ENCODE measurements at regions of chr2 and their contacts with region 1.

Region 1: DNA sequence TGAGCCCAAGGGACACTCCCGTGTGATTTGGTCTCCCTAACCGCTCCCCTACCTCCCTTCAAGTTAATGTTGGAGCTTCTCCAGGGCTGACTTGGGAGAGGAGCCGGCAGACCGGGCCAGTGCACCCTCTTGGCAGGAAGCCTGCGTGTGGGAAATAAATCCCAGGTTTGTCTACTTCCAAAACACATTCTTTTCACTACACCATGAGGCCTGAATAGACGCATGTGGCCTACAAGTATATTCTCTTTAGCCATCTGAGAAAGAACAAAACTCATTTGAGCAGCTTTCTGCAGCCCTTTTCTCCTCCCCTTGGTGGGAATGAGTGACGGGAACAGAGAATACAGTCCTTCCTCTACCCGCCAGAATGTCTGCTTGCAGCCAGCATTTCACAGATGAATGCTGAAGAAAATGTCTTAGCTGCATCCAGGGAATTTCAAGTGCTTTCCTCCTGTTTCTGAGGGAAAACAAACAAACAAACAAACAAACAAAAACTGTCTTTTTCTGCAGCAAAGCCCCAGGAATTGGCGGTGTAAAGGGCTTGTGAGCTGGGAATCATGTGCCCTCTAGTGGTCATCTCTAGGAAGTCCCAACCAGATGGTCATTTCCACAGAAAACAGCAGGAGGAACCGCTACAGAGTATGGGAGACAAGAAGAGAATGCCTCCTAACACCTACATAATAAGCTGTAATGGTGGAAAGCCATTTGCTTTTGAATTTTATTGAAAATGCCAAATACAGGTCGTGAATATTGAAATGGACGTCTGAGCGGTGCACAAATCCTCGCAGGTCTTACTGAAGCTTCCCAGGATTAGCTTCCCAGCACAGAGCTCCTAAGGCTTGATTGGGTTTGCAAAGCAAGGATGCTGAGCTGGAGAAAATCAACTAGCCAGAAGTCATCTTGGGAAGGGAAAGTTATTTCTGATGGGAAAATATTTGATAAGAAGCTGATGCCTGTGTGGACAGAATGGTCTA is 41.2 kb upstream of the DAPL1 start:
- DNase-seq: peak; percentile 71
- H3K4me3 ChIP-seq: peak overlapping the region in 1 of 2 experiments; percentile 27; a peak in 1 of 4 replicates
- H3K27ac ChIP-seq: no peak overlapping the region
- H3K4me1 ChIP-seq: 0 out of 4 replicates have a peak, but pooled peaks cover 0 to 2% of the 10 kb centered on the region in 2 experiments
- H3K27me3 ChIP-seq: peaks cover 5% of the 10 kb centered on the region; the same call in 1 of the 2 replicates
- CTCF ChIP-seq: peak; percentile 91
- EP300 ChIP-seq: no peak
- RAD21 ChIP-seq: peak; percentile 92

Region 2: GRCh38 chr2:157492189-157492773 is 1261.6 kb before region 1 on chr2:
- CTCF ChIA-PET with region 1: interaction called, 15 read pairs
- POLR2A ChIA-PET with region 1: no interaction called
- DNase-seq: peak; percentile 54
- H3K4me3 ChIP-seq: peak overlapping the region in 1 of 2 experiments; percentile 41; a peak in 1 of 4 replicates
- H3K27ac ChIP-seq: no peak overlapping the region
- H3K4me1 ChIP-seq: no peaks in the 10 kb centered on the region
- H3K27me3 ChIP-seq: peaks cover 23% of the 10 kb centered on the region
- CTCF ChIP-seq: peak; percentile 71
- EP300 ChIP-seq: no peak
- RAD21 ChIP-seq: peak; percentile 83

Region 3: DNA sequence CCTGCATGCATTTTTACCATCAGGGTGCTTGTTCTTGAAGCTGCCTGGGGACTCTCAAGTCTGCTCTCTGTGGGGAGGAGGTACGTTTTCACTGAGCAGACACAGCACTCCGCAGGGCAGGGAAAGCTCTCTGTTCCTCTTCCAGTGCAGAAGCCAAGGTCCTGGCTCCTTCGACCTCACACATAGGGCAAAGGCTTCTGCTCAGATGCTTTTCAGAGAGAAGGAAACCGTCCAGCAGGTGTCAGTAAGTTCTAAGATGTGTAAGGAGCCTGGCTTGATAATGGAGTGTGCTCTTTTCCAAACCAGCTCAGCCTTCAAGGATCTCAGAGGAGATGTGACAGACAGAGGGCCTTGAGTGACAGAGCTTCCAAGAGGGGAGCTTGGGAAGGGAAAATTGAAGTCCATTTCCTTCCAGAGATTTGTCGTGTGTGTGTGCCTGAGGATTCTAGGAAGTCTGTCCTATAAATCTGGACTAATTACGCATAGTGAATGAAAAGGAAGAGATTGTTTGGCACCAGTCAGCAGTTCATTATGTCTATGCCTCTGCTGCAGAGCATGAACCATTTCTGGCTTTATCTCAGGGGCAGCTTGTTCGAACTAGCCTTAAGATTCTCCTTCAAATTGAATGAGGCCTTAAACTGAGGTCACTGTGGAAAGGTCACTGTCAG is 719.6 kb before region 1 on chr2:
- CTCF ChIA-PET with region 1: interaction called, 105 read pairs
- POLR2A ChIA-PET with region 1: no interaction called
- DNase-seq: peak; percentile 39
- H3K4me3 ChIP-seq: no peak overlapping the region
- H3K27ac ChIP-seq: no peak overlapping the region
- H3K4me1 ChIP-seq: peaks cover 0 to 5% of the 10 kb centered on the region in 2 experiments; a peak in 1 of 4 replicates
- H3K27me3 ChIP-seq: no peaks in the 10 kb centered on the region
- CTCF ChIP-seq: peak; percentile 53
- EP300 ChIP-seq: no peak
- RAD21 ChIP-seq: peak; percentile 80

Region 4: GRCh38 chr2:158456309-158457066 is 297.4 kb before region 1 on chr2 and contains the starts of genes CCDC148 and PKP4:
- CTCF ChIA-PET with region 1: interaction called, 18 read pairs
- POLR2A ChIA-PET with region 1: interaction called, 4 read pairs
- DNase-seq: peak; percentile 95
- H3K4me3 ChIP-seq: peak within 1 kb of the TSS; percentile 76 to 77
- H3K27ac ChIP-seq: peak within 1 kb of the TSS; percentile 72 to 87
- H3K4me1 ChIP-seq: peaks cover 15 to 23% of the 10 kb centered on the region in 2 experiments; a peak in 3 of 4 replicates
- H3K27me3 ChIP-seq: no peaks in the 10 kb centered on the region
- CTCF ChIP-seq: 0 out of 2 replicates have a peak, but pooled peaks have one; percentile 7
- EP300 ChIP-seq: no peak
- RAD21 ChIP-seq: no peak
- polyA plus RNA-seq, gene CCDC148: 0.18 TPM in 1 of 2 replicates, not detected in the other
- polyA plus RNA-seq, gene PKP4: 10.9 and 13.8 TPM in 2 replicates

Region 5: GRCh38 chr2:158733430-158733755 is 20.5 kb before region 1 on chr2:
- CTCF ChIA-PET with region 1: interaction called, 13 read pairs
- POLR2A ChIA-PET with region 1: no interaction called
- DNase-seq: no peak
- H3K4me3 ChIP-seq: no peak overlapping the region
- H3K27ac ChIP-seq: no peak overlapping the region
- H3K4me1 ChIP-seq: no peaks in the 10 kb centered on the region
- H3K27me3 ChIP-seq: no peaks in the 10 kb centered on the region; the same call in 1 of the 2 replicates
- CTCF ChIP-seq: no peak
- EP300 ChIP-seq: no peak
- RAD21 ChIP-seq: no peak

Region 6: DNA sequence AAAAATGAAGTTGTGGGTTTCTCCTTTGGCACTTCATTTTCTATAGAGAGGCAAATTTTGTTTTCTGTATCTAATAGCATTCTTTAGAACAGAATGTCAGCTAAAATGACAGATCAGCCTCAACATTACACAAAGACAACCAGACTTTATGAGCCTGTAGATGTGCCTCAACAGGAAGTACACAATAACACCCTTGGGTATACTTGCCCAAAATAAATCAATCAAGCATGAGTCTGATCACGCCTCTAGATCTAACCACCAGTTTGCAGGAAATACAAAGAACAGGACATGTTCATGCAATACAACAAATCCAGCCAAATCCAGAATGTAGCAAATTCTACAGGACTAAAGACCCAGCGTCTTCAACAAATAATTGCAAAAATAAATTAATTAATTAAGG is 30.0 kb after region 1 on chr2:
- CTCF ChIA-PET with region 1: interaction called, 10 read pairs
- POLR2A ChIA-PET with region 1: no interaction called
- DNase-seq: no peak
- H3K4me3 ChIP-seq: no peak overlapping the region
- H3K27ac ChIP-seq: no peak overlapping the region
- H3K4me1 ChIP-seq: no peaks in the 10 kb centered on the region; a peak in 1 of 4 replicates
- H3K27me3 ChIP-seq: no peaks in the 10 kb centered on the region
- CTCF ChIP-seq: no peak
- EP300 ChIP-seq: no peak
- RAD21 ChIP-seq: no peak